ENCODE measurements at regions of chr15 and their contacts with region 1.

Region 1: GRCh38 chr15:31435261-31435911 is 108.8 kb downstream of the KLF13 start:
- DNase-seq: peak; percentile 81 to 85 (median 83)
- ATAC-seq: peak; percentile 95
- H3K4me3 ChIP-seq: no peak overlapping the region
- H3K27ac ChIP-seq: no peak overlapping the region
- H3K4me1 ChIP-seq: peaks cover 5 to 9% of the 10 kb centered on the region in 2 experiments; a peak in 4 of 5 replicates
- H3K27me3 ChIP-seq: peaks cover 10 to 29% of the 10 kb centered on the region in 2 experiments; a peak in 4 of 5 replicates
- CTCF ChIP-seq: peak; percentile 94 to 99 (median 99)
- EP300 ChIP-seq: no peak
- POLR2A ChIP-seq: no peak
- RAD21 ChIP-seq: peak; percentile 86 to 93

Region 2: DNA sequence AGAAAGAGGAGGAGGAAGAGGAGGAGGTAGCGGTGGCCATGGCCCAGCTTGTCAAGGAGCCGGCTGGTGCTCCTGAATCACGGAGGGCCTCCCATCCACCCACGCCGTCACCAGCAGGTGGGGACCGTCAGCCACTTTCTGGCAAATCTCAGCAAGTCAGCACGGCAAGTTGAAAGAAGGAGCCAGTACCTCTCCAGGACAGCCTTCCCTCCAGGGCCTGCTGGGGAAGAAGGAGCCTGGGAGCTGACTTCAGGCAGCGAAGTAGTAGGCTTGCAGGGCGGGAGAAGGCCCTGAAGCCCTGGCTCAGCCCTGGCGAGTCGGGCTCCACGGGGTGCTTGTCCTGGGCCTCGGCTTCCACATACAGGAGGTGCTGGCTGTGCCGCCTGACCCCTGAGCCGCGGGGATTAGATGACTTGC is 234.6 kb before region 1 on chr15:
- CTCF ChIA-PET with region 1: interaction called, 10 read pairs
- POLR2A ChIA-PET with region 1: interaction called, 3 read pairs
- in situ Hi-C with region 1: loop called (anchors 5 kb)
- intact Hi-C with region 1: no loop called
- DNase-seq: peak; percentile 31 to 55 (median 39)
- ATAC-seq: peak; percentile 82
- H3K4me3 ChIP-seq: no peak overlapping the region
- H3K27ac ChIP-seq: no peak overlapping the region
- H3K4me1 ChIP-seq: no peaks in the 10 kb centered on the region
- H3K27me3 ChIP-seq: peaks cover 0 to 40% of the 10 kb centered on the region in 2 experiments; a peak in 3 of 5 replicates
- CTCF ChIP-seq: peak; percentile 45 to 66 (median 56); a peak in 5 of 6 replicates
- EP300 ChIP-seq: no peak
- POLR2A ChIP-seq: no peak
- RAD21 ChIP-seq: peak; percentile 65 to 76

Region 3: GRCh38 chr15:31215490-31216214 is 219.7 kb before region 1 on chr15:
- CTCF ChIA-PET with region 1: interaction called, 11 read pairs
- POLR2A ChIA-PET with region 1: interaction called, 3 read pairs
- in situ Hi-C with region 1: no loop called
- intact Hi-C with region 1: loop called (anchors 1 kb)
- DNase-seq: peak; percentile 73 to 87 (median 84)
- ATAC-seq: peak; percentile 99
- H3K4me3 ChIP-seq: peak overlapping the region; percentile 34
- H3K27ac ChIP-seq: no peak overlapping the region
- H3K4me1 ChIP-seq: peaks cover 0 to 18% of the 10 kb centered on the region in 2 experiments; a peak in 2 of 5 replicates
- H3K27me3 ChIP-seq: peaks cover 8 to 26% of the 10 kb centered on the region in 2 experiments
- CTCF ChIP-seq: peak; percentile 70 to 90 (median 83)
- EP300 ChIP-seq: no peak
- POLR2A ChIP-seq: no peak
- RAD21 ChIP-seq: peak; percentile 71 to 76

Region 4: GRCh38 chr15:31365655-31366127 is 69.7 kb before region 1 on chr15:
- CTCF ChIA-PET with region 1: interaction called, 3 read pairs
- POLR2A ChIA-PET with region 1: no interaction called
- in situ Hi-C with region 1: no loop called
- intact Hi-C with region 1: loop called (anchors 2 kb)
- DNase-seq: peak; percentile 86 to 92 (median 86)
- ATAC-seq: peak; percentile 97
- H3K4me3 ChIP-seq: no peak overlapping the region
- H3K27ac ChIP-seq: peak overlapping the region; percentile 84
- H3K4me1 ChIP-seq: peaks cover 39 to 48% of the 10 kb centered on the region in 2 experiments
- H3K27me3 ChIP-seq: no peaks in the 10 kb centered on the region
- CTCF ChIP-seq: peak; percentile 47 to 68 (median 66); a peak in 5 of 6 replicates
- EP300 ChIP-seq: no peak
- POLR2A ChIP-seq: peak; percentile 60
- RAD21 ChIP-seq: peak in 1 of 2 experiments; percentile 46; a peak in 2 of 4 replicates

Region 5: GRCh38 chr15:31391687-31392671 is 43.4 kb before region 1 on chr15:
- CTCF ChIA-PET with region 1: no interaction called
- POLR2A ChIA-PET with region 1: no interaction called
- in situ Hi-C with region 1: no loop called
- intact Hi-C with region 1: no loop called
- DNase-seq: peak; percentile 71 to 89 (median 81)
- ATAC-seq: peak; percentile 92
- H3K4me3 ChIP-seq: peak overlapping the region; percentile 25
- H3K27ac ChIP-seq: no peak overlapping the region
- H3K4me1 ChIP-seq: peaks cover 0 to 23% of the 10 kb centered on the region in 2 experiments; a peak in 3 of 5 replicates
- H3K27me3 ChIP-seq: peaks cover 6 to 8% of the 10 kb centered on the region in 2 experiments
- CTCF ChIP-seq: no peak
- EP300 ChIP-seq: no peak
- POLR2A ChIP-seq: no peak
- RAD21 ChIP-seq: no peak

Region 6: GRCh38 chr15:31488426-31489204 is 53.2 kb after region 1 on chr15:
- CTCF ChIA-PET with region 1: interaction called, 5 read pairs
- POLR2A ChIA-PET with region 1: no interaction called
- in situ Hi-C with region 1: loop called (anchors 5 kb)
- intact Hi-C with region 1: loop called (anchors 5 kb)
- DNase-seq: peak; percentile 63 to 82 (median 81)
- ATAC-seq: peak; percentile 95
- H3K4me3 ChIP-seq: no peak overlapping the region
- H3K27ac ChIP-seq: no peak overlapping the region
- H3K4me1 ChIP-seq: no peaks in the 10 kb centered on the region; a peak in 1 of 5 replicates
- H3K27me3 ChIP-seq: peaks cover 0 to 12% of the 10 kb centered on the region in 2 experiments; a peak in 1 of 5 replicates
- CTCF ChIP-seq: peak; percentile 84 to 97 (median 96)
- EP300 ChIP-seq: no peak
- POLR2A ChIP-seq: no peak
- RAD21 ChIP-seq: peak; percentile 59 to 80

Region 7: DNA sequence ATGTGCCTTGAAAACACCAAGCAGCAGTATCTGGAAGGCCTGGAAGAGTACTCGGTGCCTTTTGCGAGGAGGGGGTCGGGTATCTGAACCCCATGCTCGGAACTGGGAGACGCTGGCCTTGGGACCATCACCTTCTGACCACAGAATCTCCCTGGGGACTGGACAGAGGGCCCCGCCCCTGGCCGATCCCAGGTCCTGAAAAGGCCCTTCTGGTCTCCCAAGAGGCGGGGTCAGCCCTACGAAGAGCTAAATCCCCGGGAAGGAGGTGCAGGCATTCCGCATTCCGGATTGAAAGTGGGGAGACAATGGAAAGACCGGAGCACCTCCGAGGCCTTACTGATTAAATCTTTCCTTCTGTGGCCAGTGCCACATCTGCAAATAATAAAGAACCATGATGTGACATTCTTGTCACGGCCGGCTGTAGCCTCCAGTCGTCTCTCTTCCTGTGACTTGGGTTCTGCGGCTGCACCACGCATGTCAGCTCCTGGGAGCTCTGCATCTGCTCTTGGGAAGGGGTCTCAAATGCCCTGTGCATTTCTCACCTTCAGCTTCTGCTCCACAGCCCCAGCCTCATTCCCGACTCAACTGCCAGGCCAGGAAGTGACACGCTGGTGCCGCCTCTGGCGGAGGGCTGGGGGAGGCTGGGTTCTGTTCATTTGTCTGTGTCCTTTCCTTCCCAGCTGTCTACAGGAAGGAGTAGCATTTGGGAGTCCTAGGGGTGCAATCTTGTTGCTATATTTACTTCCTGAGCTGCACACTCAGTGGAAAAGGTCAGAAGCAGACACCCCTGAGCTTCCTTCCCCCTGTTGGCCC is 64.8 kb after region 1 on chr15:
- CTCF ChIA-PET with region 1: no interaction called
- POLR2A ChIA-PET with region 1: no interaction called
- in situ Hi-C with region 1: no loop called
- intact Hi-C with region 1: no loop called
- DNase-seq: no peak
- ATAC-seq: no peak
- H3K4me3 ChIP-seq: no peak overlapping the region
- H3K27ac ChIP-seq: no peak overlapping the region
- H3K4me1 ChIP-seq: no peaks in the 10 kb centered on the region
- H3K27me3 ChIP-seq: peaks cover 0 to 28% of the 10 kb centered on the region in 2 experiments; a peak in 1 of 5 replicates
- CTCF ChIP-seq: no peak
- EP300 ChIP-seq: no peak
- POLR2A ChIP-seq: no peak
- RAD21 ChIP-seq: no peak

Region 8: GRCh38 chr15:31977812-31978661 is 542.7 kb after region 1 on chr15:
- CTCF ChIA-PET with region 1: no interaction called
- POLR2A ChIA-PET with region 1: no interaction called
- in situ Hi-C with region 1: no loop called
- intact Hi-C with region 1: loop called (anchors 10 kb)
- DNase-seq: peak; percentile 53 to 77 (median 68)
- ATAC-seq: peak; percentile 92
- H3K4me3 ChIP-seq: no peak overlapping the region
- H3K27ac ChIP-seq: no peak overlapping the region
- H3K4me1 ChIP-seq: peaks cover 0 to 4% of the 10 kb centered on the region in 2 experiments; a peak in 2 of 5 replicates
- H3K27me3 ChIP-seq: no peaks in the 10 kb centered on the region; a peak in 1 of 5 replicates
- CTCF ChIP-seq: peak; percentile 74 to 83 (median 80)
- EP300 ChIP-seq: no peak
- POLR2A ChIP-seq: no peak
- RAD21 ChIP-seq: peak; percentile 40 to 67